ENCODE measurements at regions of chr19 and their contacts with region 1.

Region 1: DNA sequence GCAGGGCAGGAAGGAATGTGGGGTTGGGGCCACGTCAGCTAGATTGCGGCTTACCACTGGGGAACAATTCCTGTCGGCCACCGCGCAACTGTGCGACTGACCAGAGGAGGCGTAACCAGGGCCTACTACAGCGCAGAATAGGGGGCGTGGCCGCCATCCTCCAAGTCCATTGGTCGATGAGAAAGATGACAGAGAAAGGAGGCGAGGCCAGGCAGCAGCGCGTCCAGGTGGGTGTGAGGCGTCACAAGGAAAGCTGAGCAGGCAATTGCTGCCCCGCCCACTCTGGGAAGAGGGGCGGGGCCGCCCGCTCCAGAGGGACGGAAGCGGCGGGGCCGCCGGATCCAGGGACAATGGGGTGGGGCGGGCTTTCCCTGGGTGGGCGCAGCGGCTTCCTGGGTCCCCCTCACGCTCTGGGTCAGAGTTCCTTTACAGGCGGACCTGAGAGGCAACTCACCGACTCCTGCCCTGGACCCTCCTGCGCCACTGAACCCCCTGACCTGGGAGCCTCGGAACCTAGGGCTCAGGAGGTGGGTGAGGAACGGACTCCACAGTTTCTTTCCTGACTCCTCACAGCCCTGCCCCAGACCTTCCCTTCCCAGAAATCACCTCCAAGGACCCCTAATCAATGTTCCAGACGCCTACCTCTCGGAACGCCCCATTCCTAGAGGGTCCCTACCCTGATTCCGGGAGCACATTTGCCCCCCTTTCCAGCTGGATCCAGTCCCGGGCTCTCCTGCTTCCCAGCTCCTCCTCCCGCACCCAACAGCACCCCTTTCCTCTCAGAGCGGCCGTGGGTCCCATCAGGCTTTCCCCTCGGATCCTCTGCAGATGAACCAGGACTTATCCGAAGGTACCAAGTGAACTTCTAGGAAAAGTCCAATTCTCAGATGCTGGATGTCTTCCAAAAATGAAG is 101.5 kb upstream of the ZNF492 start:
- DNase-seq: peak; percentile 94
- ATAC-seq: peak; percentile 96
- H3K4me3 ChIP-seq: peak overlapping the region; percentile 49 to 70
- H3K27ac ChIP-seq: no peak overlapping the region
- H3K4me1 ChIP-seq: peaks cover 0 to 2% of the 10 kb centered on the region in 2 donors
- H3K27me3 ChIP-seq: no peaks in the 10 kb centered on the region

Region 2: GRCh38 chr19:21505459-21506451 is 1026.9 kb before region 1 on chr19 and contains the start of gene ZNF429:
- intact Hi-C with region 1: loop called in 1 of 2 experiments (anchors 5 kb)
- DNase-seq: peak; percentile 95
- ATAC-seq: peak; percentile 98
- H3K4me3 ChIP-seq: peak within 1 kb of the TSS; percentile 47 to 93
- H3K27ac ChIP-seq: peak within 1 kb of the TSS; percentile 6 to 98
- H3K4me1 ChIP-seq: peaks cover 0 to 2% of the 10 kb centered on the region in 2 donors
- H3K27me3 ChIP-seq: no peaks in the 10 kb centered on the region
- total RNA-seq, gene ZNF429: 5.8 to 14.3 TPM

Region 3: GRCh38 chr19:21851596-21852345 is 680.9 kb before region 1 on chr19:
- intact Hi-C with region 1: loop called in 1 of 2 experiments (anchors 10 kb)
- DNase-seq: peak; percentile 97
- ATAC-seq: peak; percentile 99
- H3K4me3 ChIP-seq: peak overlapping the region; percentile 62 to 71
- H3K27ac ChIP-seq: peak overlapping the region in 1 of 2 donors; percentile 87
- H3K4me1 ChIP-seq: no peaks in the 10 kb centered on the region
- H3K27me3 ChIP-seq: no peaks in the 10 kb centered on the region

Region 4: GRCh38 chr19:22502766-22503165 is 29.9 kb before region 1 on chr19:
- intact Hi-C with region 1: no loop called
- DNase-seq: no peak
- ATAC-seq: no peak
- H3K4me3 ChIP-seq: no peak overlapping the region
- H3K27ac ChIP-seq: no peak overlapping the region
- H3K4me1 ChIP-seq: no peaks in the 10 kb centered on the region
- H3K27me3 ChIP-seq: no peaks in the 10 kb centered on the region

Measured in aorta (tissue), 5 donors.